Cardiac septum (tissue), 1 donor: ENCODE measurements at regions of chr2 and their contacts with region 1.

Region 1: DNA sequence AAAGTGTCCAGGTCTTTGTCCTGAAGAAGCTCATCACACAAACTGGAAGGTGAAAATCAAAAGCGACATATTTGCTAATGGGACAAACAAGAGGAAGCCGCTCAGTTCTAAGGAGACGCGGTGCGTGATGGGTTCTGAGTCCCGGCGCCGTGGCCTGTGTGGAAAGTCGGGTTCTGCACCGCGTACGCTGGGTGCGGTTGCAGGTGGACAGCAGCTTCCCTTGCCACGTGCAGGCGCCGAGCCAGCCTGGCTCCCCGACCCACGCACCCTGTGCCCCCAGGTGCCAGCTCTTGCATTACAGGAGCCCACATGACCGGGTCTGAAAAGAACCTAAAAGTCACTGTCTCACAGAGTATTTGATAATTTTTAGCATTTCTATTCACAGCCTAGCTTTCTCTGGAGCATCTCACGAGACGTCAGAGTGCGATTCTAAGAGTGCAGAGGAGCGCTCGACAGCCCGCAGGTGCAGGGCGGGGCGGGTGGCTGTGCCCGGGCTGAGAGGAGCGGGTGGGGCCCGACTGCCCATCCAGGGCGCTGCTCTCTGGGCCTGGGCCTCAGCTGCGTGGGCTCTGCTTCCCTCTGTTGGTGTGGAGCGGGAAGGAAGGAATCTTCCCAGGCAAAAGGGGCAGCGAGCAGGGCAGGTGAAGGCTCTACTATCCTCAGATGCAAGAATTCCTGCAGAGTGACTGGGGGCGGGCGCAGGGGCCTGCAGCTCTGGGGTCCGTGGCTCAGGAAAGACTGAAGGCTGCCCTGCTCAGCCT is 39.4 kb downstream of the MYT1L start:
- DNase-seq: no peak

Region 2: DNA sequence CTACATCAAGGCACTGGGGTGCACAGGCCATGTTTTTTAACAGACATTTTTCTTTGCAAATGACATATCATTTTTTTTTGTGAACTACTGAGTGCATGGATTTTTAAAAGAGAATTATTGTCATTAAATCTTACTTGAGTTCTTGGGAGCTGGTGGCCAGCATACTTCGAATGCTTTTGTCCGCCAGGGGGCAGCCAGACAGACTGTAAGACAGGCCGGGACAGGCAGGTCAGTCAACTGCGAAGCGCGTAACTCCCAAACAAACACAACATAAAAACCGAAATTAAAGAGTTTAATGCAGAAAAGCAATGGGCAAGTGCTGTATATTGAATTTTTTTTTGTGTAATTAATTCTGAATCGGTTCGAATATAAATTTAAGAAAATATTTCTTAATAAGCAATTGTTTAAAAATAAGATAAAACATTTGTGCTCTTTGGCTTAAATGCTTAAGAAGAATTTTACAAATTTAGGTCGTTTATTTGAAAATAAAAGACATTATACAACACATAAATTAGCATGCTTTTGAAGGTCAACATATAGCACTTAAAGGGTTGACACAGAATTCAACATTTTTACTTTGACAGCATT is 405.2 kb before region 1 on chr2:
- intact Hi-C with region 1: loop called (anchors 10 kb)
- DNase-seq: no peak

Region 3: GRCh38 chr2:1910592-1911246 is 381.0 kb before region 1 on chr2:
- intact Hi-C with region 1: loop called (anchors 5 kb)
- DNase-seq: no peak

Region 4: DNA sequence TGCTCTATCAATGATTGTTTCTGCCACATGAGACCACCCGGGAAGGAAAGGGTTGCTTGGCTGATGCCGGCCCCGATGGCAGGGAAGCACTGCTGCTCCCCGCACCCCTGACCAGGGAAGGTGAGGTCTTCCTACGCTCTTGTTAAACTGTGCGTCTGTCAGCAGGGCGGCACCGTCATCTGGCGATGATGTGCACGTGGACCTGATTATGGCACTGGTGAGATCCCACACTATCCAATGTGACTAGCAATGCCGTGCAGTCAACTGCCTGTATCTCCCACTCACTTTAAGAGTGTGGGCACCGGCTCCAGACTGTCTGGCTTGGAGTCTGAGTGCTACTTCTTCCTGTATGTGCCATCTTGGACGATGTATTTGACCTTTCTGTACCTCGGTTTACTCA is 169.8 kb before region 1 on chr2:
- intact Hi-C with region 1: loop called (anchors 2 kb)
- DNase-seq: no peak